Naive thymus-derived CD4-positive, alpha-beta T cell (primary cell): ENCODE measurements at regions of chr11 and their contacts with region 1.

Region 1: GRCh38 chr11:73982969-73983740 is 512 bp upstream of the UCP2 start:
- DNase-seq: peak; percentile 83 to 94 (median 92)
- ATAC-seq: peak; percentile 86
- H3K4me3 ChIP-seq: peak overlapping the region; percentile 93
- H3K4me3 Mint-ChIP-seq: peak overlapping the region; percentile 93 to 100 (median 99)
- H3K27ac ChIP-seq: peak overlapping the region; percentile 96
- H3K27ac Mint-ChIP-seq: peak overlapping the region; percentile 98 to 100 (median 99)
- H3K4me1 ChIP-seq: peaks cover 26 to 31% of the 10 kb centered on the region in 2 donors
- H3K4me1 Mint-ChIP-seq: peaks cover 29 to 55% (median 44%) of the 10 kb centered on the region in 7 donors
- H3K27me3 ChIP-seq: no peaks in the 10 kb centered on the region
- H3K27me3 Mint-ChIP-seq: no peaks in the 10 kb centered on the region

Region 2: DNA sequence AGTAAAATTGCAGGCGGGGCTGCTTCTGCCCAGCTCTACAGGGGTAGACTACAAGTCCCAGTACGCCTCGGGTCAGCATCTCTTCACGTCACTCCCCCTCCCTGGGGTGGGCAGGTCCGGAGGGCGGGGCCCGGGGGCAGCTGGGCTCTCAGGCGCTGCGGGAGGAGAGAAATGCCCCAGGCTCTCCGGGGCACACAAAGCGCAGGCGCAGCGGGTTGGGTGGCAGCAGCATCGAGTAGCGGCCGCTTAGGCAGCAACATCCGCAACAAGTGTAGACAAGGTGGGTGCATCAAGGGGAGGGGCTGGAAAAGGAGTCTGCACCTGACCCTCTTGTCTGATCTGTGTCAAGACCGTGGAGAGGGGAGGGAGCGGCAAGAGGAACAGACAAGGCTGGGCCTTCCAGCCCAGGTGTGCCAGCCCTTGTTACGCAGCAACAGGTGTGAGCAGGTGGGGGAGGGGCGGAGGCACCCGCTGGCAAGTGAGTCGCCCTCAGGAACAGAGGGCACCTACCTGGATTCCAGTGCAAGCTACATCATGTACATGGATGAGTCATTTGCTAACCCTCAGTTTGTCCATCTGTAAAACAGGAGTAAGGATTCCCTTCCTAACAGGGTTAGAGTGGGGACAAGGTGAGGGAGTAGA is 335.6 kb before region 1 on chr11:
- CTCF ChIA-PET with region 1: no interaction called
- POLR2A ChIA-PET with region 1: no interaction called
- intact Hi-C with region 1: no loop called
- DNase-seq: peak; percentile 81 to 96 (median 94)
- ATAC-seq: peak; percentile 100
- H3K4me3 ChIP-seq: peak overlapping the region; percentile 62
- H3K4me3 Mint-ChIP-seq: peak overlapping the region; percentile 71 to 96 (median 92)
- H3K27ac ChIP-seq: peak overlapping the region; percentile 71
- H3K27ac Mint-ChIP-seq: peak overlapping the region; percentile 83 to 98 (median 94)
- H3K4me1 ChIP-seq: peaks cover 7 to 15% of the 10 kb centered on the region in 2 donors
- H3K4me1 Mint-ChIP-seq: peaks cover 10 to 41% (median 34%) of the 10 kb centered on the region in 7 donors
- H3K27me3 ChIP-seq: no peaks in the 10 kb centered on the region
- H3K27me3 Mint-ChIP-seq: peaks cover 0 to 8% (median 0%) of the 10 kb centered on the region in 5 donors

Region 3: DNA sequence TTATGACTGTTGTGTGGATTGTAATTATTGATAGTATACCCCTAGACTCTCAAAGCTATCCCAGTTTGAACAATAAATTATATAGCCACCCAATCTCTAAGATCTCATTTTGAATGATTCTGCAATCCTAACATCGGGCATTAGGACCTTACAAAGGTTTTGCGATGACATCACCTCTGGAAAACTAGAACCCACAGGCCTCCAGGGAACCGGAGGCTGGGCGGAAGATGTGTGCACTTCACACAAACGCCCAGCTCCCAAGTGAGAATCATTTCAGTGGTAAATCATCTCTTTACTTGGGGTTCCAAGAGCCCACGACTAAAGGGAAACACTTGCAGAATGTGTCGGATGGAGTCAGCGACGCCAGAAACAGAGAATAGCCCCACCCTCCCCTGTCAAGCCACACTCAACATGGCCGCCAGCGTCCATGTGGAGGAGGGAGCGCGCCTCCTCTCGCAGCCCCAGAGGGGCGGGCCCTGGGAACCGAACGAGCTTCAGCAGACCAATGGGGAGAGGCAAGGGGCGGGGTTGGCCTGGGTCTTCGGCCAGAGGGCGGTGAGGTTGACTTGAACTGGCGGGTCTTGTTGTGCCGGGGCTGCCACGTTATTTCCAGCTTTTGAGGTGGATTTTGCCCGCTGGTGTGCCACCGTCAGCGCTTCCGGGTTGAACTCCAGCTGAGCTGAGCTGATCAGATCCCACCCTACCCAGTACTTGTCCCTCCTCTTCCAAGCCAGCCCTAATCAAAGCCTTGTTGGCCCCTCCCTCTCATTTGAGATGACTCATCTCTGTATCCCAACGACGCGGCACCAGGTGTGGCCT is 203.9 kb before region 1 on chr11:
- CTCF ChIA-PET with region 1: no interaction called
- POLR2A ChIA-PET with region 1: interaction called, 6 read pairs
- intact Hi-C with region 1: loop called in 1 of 2 experiments (anchors 2 kb)
- DNase-seq: peak; percentile 88 to 98 (median 97)
- ATAC-seq: peak; percentile 99
- H3K4me3 ChIP-seq: peak overlapping the region; percentile 58
- H3K4me3 Mint-ChIP-seq: peak overlapping the region; percentile 86 to 97 (median 94)
- H3K27ac ChIP-seq: peak overlapping the region; percentile 89
- H3K27ac Mint-ChIP-seq: peak overlapping the region; percentile 94 to 100 (median 100)
- H3K4me1 ChIP-seq: peaks cover 0 to 6% of the 10 kb centered on the region in 2 donors
- H3K4me1 Mint-ChIP-seq: peaks cover 2 to 18% (median 9%) of the 10 kb centered on the region in 7 donors
- H3K27me3 ChIP-seq: no peaks in the 10 kb centered on the region
- H3K27me3 Mint-ChIP-seq: peaks cover 0 to 6% (median 0%) of the 10 kb centered on the region in 5 donors

Region 4: GRCh38 chr11:73965076-73965860 is 17.9 kb before region 1 on chr11:
- CTCF ChIA-PET with region 1: interaction called, 16 read pairs
- POLR2A ChIA-PET with region 1: interaction called, 1,403 read pairs
- intact Hi-C with region 1: loop called (anchors 1 kb)
- DNase-seq: no peak
- ATAC-seq: no peak
- H3K4me3 ChIP-seq: no peak overlapping the region
- H3K4me3 Mint-ChIP-seq: peak overlapping the region in 5 of 10 donors; percentile 18 to 59 (median 47)
- H3K27ac ChIP-seq: no peak overlapping the region
- H3K27ac Mint-ChIP-seq: peak overlapping the region in 8 of 9 donors; percentile 36 to 86 (median 74)
- H3K4me1 ChIP-seq: peaks cover 41 to 50% of the 10 kb centered on the region in 2 donors
- H3K4me1 Mint-ChIP-seq: peaks cover 29 to 57% (median 44%) of the 10 kb centered on the region in 7 donors
- H3K27me3 ChIP-seq: no peaks in the 10 kb centered on the region
- H3K27me3 Mint-ChIP-seq: no peaks in the 10 kb centered on the region

Region 5: DNA sequence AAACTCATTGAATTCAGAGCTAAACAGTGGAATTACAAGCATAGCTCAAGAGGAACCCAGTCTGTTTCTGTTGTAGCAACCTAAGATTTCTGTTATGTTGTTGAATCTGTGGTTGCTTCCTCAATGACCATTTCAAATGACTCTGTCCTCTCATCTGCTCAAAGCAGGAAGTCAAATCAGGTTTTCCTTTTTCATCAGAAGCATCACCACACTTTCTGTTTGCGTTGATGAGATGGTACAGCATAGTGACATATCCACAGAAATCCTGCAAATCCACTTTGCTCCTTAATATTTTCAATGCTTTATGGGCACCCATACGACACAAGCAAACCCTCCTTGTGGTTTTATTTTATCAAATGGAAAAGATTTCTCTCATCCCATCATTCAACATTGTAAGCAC is 12.1 kb after region 1 on chr11:
- CTCF ChIA-PET with region 1: interaction called, 23 read pairs
- POLR2A ChIA-PET with region 1: interaction called, 1,403 read pairs
- intact Hi-C with region 1: loop called (anchors 1 kb)
- DNase-seq: peak in 8 of 9 donors; percentile 16 to 93 (median 90)
- ATAC-seq: peak; percentile 85
- H3K4me3 ChIP-seq: peak overlapping the region; percentile 4
- H3K4me3 Mint-ChIP-seq: peak overlapping the region; percentile 65 to 92 (median 80)
- H3K27ac ChIP-seq: peak overlapping the region; percentile 92
- H3K27ac Mint-ChIP-seq: peak overlapping the region; percentile 93 to 100 (median 97)
- H3K4me1 ChIP-seq: peaks cover 33 to 45% of the 10 kb centered on the region in 2 donors
- H3K4me1 Mint-ChIP-seq: peaks cover 26 to 81% (median 71%) of the 10 kb centered on the region in 7 donors
- H3K27me3 ChIP-seq: no peaks in the 10 kb centered on the region
- H3K27me3 Mint-ChIP-seq: no peaks in the 10 kb centered on the region

Region 6: DNA sequence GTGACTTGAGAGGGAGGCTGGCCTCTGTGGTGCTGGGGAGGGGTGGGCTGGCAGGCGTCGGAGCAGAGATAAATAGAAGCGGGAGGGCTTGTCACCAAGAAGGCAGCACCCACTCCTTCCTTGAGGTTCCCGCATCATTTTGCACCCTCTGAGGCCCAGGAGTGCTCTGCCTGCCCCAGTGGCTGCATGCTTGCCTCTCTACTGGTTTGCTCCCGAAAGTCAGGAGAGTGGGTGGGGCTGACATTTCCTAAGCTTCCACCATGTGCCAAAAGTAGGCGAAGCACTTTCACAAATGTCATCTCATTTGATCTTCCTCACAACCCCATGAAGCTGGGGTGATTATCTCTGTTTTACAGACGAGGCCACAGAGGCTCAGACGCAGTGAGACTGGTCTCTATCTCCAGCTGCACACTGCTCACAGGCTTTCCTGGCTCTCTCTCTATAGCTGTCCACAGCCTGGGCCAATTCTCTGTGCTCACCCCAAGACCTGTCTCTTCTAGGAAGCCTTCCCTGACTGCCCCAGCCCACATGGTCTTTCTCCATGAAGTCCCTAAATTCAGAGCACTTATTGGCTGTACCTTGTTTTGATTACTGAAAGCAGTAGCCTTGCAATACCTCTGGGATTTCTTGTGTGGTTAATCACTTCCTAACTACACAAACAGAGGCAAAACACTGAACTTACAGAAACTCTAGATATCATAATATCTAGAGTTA is 28.4 kb after region 1 on chr11:
- CTCF ChIA-PET with region 1: interaction called, 24 read pairs
- POLR2A ChIA-PET with region 1: interaction called, 1,403 read pairs
- intact Hi-C with region 1: loop called (anchors 1 kb)
- DNase-seq: peak in 8 of 9 donors; percentile 16 to 67 (median 46)
- ATAC-seq: peak; percentile 84
- H3K4me3 ChIP-seq: no peak overlapping the region
- H3K4me3 Mint-ChIP-seq: peak overlapping the region; percentile 55 to 81 (median 66)
- H3K27ac ChIP-seq: peak overlapping the region; percentile 61
- H3K27ac Mint-ChIP-seq: peak overlapping the region; percentile 80 to 98 (median 94)
- H3K4me1 ChIP-seq: peaks cover 83 to 95% of the 10 kb centered on the region in 2 donors
- H3K4me1 Mint-ChIP-seq: peaks cover 46 to 99% (median 87%) of the 10 kb centered on the region in 7 donors
- H3K27me3 ChIP-seq: no peaks in the 10 kb centered on the region
- H3K27me3 Mint-ChIP-seq: no peaks in the 10 kb centered on the region

Region 7: GRCh38 chr11:74492974-74493790 is 510.0 kb after region 1 on chr11 and contains the start of gene LIPT2:
- CTCF ChIA-PET with region 1: no interaction called
- POLR2A ChIA-PET with region 1: interaction called, 3 read pairs
- intact Hi-C with region 1: loop called (anchors 5 to 10 kb)
- DNase-seq: peak; percentile 92 to 98 (median 96)
- ATAC-seq: peak; percentile 97
- H3K4me3 ChIP-seq: peak within 1 kb of the TSS; percentile 90
- H3K4me3 Mint-ChIP-seq: peak within 1 kb of the TSS; percentile 74 to 92 (median 86)
- H3K27ac ChIP-seq: peak within 1 kb of the TSS; percentile 95
- H3K27ac Mint-ChIP-seq: peak within 1 kb of the TSS; percentile 73 to 96 (median 89)
- H3K4me1 ChIP-seq: peaks cover 8 to 10% of the 10 kb centered on the region in 2 donors
- H3K4me1 Mint-ChIP-seq: peaks cover 14 to 43% (median 28%) of the 10 kb centered on the region in 7 donors
- H3K27me3 ChIP-seq: no peaks in the 10 kb centered on the region
- H3K27me3 Mint-ChIP-seq: no peaks in the 10 kb centered on the region
- total RNA-seq, gene LIPT2: 1.9 to 18.2 (median 9.3) TPM